Sigmoid colon (tissue), 7 donors: ENCODE measurements at regions of chr1 and their contacts with region 1.

Region 1: GRCh38 chr1:115469703-115470476 is 131.8 kb upstream of the NGF start:
- DNase-seq: no peak
- H3K4me3 ChIP-seq: no peak overlapping the region
- H3K27ac ChIP-seq: no peak overlapping the region
- H3K4me1 ChIP-seq: peaks cover 0 to 7% (median 0%) of the 10 kb centered on the region in 4 donors
- H3K27me3 ChIP-seq: no peaks in the 10 kb centered on the region
- CTCF ChIP-seq: peak; percentile 47 to 87 (median 78)
- EP300 ChIP-seq: no peak
- POLR2A ChIP-seq: no peak

Region 2: GRCh38 chr1:114997510-114998289 is 472.2 kb before region 1 on chr1:
- intact Hi-C with region 1: loop called (anchors 10 kb)
- DNase-seq: no peak
- H3K4me3 ChIP-seq: no peak overlapping the region
- H3K27ac ChIP-seq: no peak overlapping the region
- H3K4me1 ChIP-seq: no peaks in the 10 kb centered on the region
- H3K27me3 ChIP-seq: no peaks in the 10 kb centered on the region
- CTCF ChIP-seq: no peak
- EP300 ChIP-seq: no peak
- POLR2A ChIP-seq: no peak

Region 3: DNA sequence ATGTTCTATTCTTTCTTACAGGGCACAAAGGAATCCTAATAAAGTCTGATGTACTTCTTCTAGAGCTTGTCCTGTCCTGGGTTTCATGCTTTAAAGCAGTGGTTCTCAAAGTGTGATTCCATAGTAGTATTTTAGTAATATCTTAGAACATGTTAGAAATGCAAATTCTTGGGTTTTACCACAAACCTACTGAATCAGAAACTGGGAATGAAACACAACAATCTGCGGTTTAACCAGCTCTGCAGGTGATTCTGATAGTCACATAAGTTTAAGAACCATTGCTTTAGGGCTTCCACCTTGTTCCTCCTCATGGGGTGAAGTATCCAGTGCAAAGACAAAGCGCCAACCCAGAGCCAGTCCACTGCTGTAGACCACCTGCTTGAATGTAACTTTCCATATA is 172.9 kb before region 1 on chr1:
- intact Hi-C with region 1: no loop called
- DNase-seq: no peak
- H3K4me3 ChIP-seq: no peak overlapping the region
- H3K27ac ChIP-seq: no peak overlapping the region
- H3K4me1 ChIP-seq: no peaks in the 10 kb centered on the region
- H3K27me3 ChIP-seq: no peaks in the 10 kb centered on the region
- CTCF ChIP-seq: no peak
- EP300 ChIP-seq: no peak
- POLR2A ChIP-seq: no peak

Region 4: DNA sequence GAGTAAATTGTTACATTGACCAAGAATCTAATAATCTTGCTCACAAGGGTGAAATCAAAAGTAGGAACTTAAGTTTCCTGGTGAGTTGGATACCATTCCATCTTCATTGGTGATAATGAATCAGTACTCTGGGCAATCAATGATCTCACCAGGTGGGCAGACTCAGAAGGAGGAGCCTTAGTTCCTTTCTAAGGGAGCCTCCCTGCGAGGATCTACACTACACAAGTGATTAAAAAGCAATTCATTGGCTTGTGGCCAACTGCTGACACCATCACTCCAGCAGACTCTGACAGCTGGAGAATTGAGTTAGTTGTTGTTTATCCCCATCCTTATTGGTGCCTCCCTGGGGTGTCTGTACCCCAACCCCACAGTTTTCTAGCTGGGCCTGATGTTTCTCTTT is 87.8 kb after region 1 on chr1:
- intact Hi-C with region 1: no loop called
- DNase-seq: no peak
- H3K4me3 ChIP-seq: no peak overlapping the region
- H3K27ac ChIP-seq: no peak overlapping the region
- H3K4me1 ChIP-seq: no peaks in the 10 kb centered on the region
- H3K27me3 ChIP-seq: peaks cover 0 to 9% (median 0%) of the 10 kb centered on the region in 3 donors
- CTCF ChIP-seq: no peak
- EP300 ChIP-seq: no peak
- POLR2A ChIP-seq: no peak

Region 5: DNA sequence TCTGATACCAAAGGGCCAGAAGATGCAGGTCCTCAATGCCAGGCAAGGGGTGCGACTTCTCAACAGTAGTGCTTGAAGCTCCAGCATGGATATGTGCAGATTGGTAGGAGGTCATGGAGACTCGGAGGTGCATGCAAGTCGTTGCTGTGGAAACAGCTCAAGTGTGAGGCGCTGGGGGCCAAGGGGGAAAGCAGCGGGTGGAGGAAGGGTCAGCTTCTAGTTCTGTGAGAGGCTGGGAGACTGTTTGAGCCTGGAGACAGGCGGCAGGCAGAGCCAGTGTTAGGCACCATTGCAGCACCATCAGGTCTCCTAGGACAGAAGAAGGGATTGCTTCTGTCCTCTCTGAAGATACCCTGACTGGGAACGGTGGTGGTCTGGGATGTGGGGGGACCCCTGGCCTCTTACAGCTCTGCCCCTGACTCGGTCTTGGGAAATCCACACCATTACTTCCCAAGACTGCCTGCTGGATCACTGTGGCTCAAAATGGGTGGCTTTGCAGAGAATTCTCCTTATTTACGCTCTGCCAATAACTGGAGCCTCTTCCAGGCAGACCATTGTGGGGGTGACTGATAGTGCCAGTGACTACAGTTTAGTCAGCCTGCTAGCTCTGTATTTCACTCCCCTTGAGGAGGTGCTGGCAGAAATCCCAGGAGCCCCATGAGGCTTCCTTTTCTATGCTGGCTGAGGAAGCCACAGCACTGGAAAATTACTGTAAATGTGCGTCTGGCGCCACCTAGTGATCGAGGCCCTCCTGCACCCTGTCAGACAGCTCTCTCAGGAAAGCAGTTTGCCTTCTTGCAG is 125.6 kb after region 1 on chr1:
- intact Hi-C with region 1: loop called (anchors 10 kb)
- DNase-seq: peak; percentile 91
- H3K4me3 ChIP-seq: no peak overlapping the region
- H3K27ac ChIP-seq: no peak overlapping the region
- H3K4me1 ChIP-seq: peaks cover 0 to 5% (median 4%) of the 10 kb centered on the region in 4 donors
- H3K27me3 ChIP-seq: no peaks in the 10 kb centered on the region
- CTCF ChIP-seq: peak; percentile 69 to 91 (median 82)
- EP300 ChIP-seq: no peak
- POLR2A ChIP-seq: no peak